Activated naive CD4-positive, alpha-beta T cell treated with anti-CD3 and anti-CD28 coated beads for 36 hours (primary cell): ENCODE measurements at regions of chr20 and their contacts with region 1.

Region 1: DNA sequence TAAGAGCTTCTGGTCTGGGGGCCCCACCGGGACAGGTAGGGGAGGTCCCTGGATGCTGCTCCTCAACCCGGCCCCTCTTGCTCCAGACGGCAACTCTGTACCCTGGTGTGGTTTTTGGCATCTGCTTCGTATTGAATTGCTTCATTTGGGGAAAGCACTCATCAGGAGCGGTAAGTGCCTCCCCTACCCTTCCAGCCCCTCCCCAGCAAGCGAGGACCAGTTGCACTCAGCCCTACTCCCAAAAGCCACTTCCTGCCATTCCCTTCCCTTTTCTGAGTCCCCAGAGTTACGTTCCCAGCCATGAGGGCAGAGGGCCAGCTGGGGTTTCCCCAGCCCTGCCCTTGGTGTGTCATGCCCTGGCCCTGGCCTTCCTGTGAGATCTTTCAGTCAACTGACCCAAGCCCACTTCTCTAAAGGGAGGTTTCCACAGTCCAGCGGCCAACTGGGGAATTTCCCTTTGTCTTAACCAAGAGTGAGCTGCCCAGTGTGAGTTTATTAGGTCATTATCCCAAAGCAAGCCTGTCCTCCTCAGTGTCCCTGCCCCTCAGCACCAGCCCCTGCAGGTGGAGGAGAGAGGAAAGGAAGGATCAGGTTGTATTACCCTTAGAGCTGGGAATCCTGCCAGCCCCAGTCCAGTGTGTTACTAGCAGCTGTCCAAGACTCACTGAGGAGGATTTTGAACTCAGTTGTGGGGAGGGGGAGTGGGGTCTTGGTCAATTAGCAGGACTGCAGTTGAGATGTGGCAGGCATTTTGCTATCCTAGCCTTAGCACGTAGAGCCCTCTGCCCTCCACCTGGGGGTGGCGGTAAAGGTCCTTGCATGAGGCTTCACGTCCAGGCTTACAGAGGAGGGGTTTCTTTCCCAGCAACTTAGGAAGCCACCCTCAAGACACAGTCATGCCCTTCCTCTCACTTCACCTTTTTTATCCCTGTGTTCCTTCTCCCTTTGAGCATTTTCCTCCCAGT is 45.8 kb downstream of the TM9SF4 start:
- DNase-seq: peak; percentile 62
- H3K4me3 Mint-ChIP-seq: no peak overlapping the region
- H3K27ac Mint-ChIP-seq: peak overlapping the region; percentile 16
- H3K4me1 Mint-ChIP-seq: peaks cover 4% of the 10 kb centered on the region
- H3K27me3 Mint-ChIP-seq: no peaks in the 10 kb centered on the region

Region 2: DNA sequence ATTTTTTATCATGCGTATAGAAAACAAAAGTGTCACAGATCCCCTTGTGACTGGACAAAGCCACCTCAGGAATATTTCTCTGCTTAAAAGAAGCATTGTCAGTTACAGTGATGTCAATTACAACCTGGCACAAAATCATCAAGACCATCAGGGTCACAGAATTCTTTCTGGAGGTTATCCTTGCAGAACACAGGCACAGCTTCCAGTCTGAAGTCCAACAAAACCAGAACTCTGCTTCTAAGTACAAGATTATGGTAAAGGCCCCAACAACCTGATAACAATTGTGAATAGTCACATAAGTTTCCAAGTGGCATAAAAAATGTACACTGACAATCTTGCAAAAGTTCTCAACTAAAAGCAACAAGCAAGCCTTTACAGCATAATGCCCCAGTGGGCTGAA is 31.2 kb after region 1 on chr20:
- CTCF ChIA-PET with region 1: interaction called, 4 read pairs
- intact Hi-C with region 1: loop called (anchors 1 kb)
- DNase-seq: no peak
- H3K4me3 Mint-ChIP-seq: no peak overlapping the region
- H3K27ac Mint-ChIP-seq: no peak overlapping the region
- H3K4me1 Mint-ChIP-seq: peaks cover 18% of the 10 kb centered on the region
- H3K27me3 Mint-ChIP-seq: no peaks in the 10 kb centered on the region

Region 3: GRCh38 chr20:32387252-32387651 is 232.0 kb after region 1 on chr20:
- CTCF ChIA-PET with region 1: no interaction called
- intact Hi-C with region 1: no loop called
- DNase-seq: peak; percentile 45
- H3K4me3 Mint-ChIP-seq: no peak overlapping the region
- H3K27ac Mint-ChIP-seq: no peak overlapping the region
- H3K4me1 Mint-ChIP-seq: peaks cover 62% of the 10 kb centered on the region
- H3K27me3 Mint-ChIP-seq: no peaks in the 10 kb centered on the region

Region 4: DNA sequence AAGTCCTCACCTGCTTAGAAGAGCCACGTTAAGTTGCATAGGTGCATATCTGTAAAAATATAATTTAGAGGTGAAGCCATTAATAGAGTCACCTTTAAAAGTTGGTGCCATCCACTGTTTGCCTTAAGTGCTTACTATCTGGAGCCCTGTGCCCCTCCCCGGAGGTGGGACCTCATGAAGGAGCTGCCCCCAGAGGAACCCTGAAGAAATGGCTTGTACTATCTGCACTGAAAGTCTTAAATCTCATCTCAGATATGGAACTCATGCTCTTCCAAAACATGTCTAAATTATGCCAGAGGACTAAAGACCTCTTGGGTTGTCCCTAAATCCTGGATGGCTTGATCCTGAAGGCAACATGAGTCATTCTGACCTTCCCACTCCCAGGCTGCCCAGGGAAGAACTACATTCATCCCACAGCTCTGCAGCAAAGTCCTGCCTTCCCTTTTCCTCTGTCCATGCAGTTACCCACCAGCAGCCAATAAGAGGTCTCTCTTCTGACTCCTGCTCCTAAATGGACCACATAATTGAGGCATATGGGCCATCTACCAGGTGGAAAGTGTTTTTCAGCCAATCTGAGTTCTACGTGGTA is 288.2 kb after region 1 on chr20:
- CTCF ChIA-PET with region 1: interaction called, 3 read pairs
- intact Hi-C with region 1: loop called (anchors 2 kb)
- DNase-seq: peak; percentile 11
- H3K4me3 Mint-ChIP-seq: no peak overlapping the region
- H3K27ac Mint-ChIP-seq: peak overlapping the region; percentile 68
- H3K4me1 Mint-ChIP-seq: peaks cover 9% of the 10 kb centered on the region
- H3K27me3 Mint-ChIP-seq: no peaks in the 10 kb centered on the region

Region 5: GRCh38 chr20:32484958-32485769 is 329.9 kb after region 1 on chr20:
- CTCF ChIA-PET with region 1: no interaction called
- intact Hi-C with region 1: loop called (anchors 1 kb)
- DNase-seq: peak; percentile 95
- H3K4me3 Mint-ChIP-seq: peak overlapping the region; percentile 84
- H3K27ac Mint-ChIP-seq: peak overlapping the region; percentile 93
- H3K4me1 Mint-ChIP-seq: peaks cover 39% of the 10 kb centered on the region
- H3K27me3 Mint-ChIP-seq: no peaks in the 10 kb centered on the region